CD8-positive, alpha-beta T cell (primary cell): ENCODE measurements at regions of chr20 and their contacts with region 1.

Region 1: DNA sequence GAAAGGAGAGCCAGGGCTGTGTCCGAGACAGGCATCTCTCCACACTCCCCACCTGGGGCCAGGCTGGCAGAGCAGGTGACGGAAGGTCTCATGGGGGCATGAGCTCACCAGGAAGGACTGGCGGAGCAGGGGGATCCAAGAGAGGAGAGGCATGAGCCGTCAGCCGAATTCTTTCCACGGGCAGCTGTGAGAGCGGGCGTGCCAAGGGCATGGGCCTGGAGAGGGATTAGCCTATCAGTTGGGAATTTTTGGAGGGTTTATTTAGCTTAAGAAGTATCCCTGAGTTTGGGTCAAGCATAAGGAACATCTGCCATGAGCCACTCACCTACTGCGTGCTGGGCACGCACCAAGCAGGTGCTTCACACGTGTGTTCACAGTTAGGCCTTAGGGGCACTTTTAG is 60.2 kb upstream of the ZNFX1 start:
- DNase-seq: no peak
- ATAC-seq: no peak
- H3K4me3 ChIP-seq: no peak overlapping the region
- H3K4me3 Mint-ChIP-seq: no peak overlapping the region
- H3K27ac ChIP-seq: no peak overlapping the region
- H3K27ac Mint-ChIP-seq: no peak overlapping the region
- H3K4me1 ChIP-seq: no peaks in the 10 kb centered on the region
- H3K4me1 Mint-ChIP-seq: no peaks in the 10 kb centered on the region
- H3K27me3 ChIP-seq: peaks cover 3% of the 10 kb centered on the region in 2 experiments
- H3K27me3 Mint-ChIP-seq: peaks cover 5% of the 10 kb centered on the region
- CTCF ChIP-seq: no peak

Region 2: DNA sequence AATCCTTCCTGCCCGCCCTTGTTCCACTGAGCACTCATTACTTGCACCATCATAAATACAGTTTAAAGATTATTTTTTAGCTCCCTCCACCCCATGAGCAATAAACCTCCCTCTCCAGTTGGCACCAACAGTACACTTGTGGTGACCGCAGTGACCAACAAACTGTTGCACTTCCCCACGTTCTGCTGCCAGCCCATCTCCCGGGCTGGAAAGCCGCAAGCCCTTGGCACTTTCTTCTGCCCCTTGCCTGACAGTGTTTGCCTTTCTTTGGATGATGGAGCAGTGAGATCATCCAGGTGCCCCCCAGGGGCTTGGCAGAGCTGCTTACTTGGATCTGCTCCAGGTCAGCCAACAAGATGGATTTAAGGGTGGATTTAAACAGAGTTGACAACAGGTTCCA is 122.9 kb after region 1 on chr20:
- CTCF ChIA-PET with region 1: no interaction called
- POLR2A ChIA-PET with region 1: no interaction called
- intact Hi-C with region 1: no loop called
- DNase-seq: no peak
- ATAC-seq: no peak
- H3K4me3 ChIP-seq: no peak overlapping the region
- H3K4me3 Mint-ChIP-seq: no peak overlapping the region
- H3K27ac ChIP-seq: no peak overlapping the region
- H3K27ac Mint-ChIP-seq: no peak overlapping the region
- H3K4me1 ChIP-seq: no peaks in the 10 kb centered on the region
- H3K4me1 Mint-ChIP-seq: no peaks in the 10 kb centered on the region
- H3K27me3 ChIP-seq: peaks cover 0 to 2% of the 10 kb centered on the region in 2 experiments
- H3K27me3 Mint-ChIP-seq: peaks cover 5% of the 10 kb centered on the region
- CTCF ChIP-seq: no peak

Region 3: GRCh38 chr20:49484180-49485140 is 146.4 kb after region 1 on chr20:
- CTCF ChIA-PET with region 1: interaction called, 6 read pairs
- POLR2A ChIA-PET with region 1: no interaction called
- intact Hi-C with region 1: loop called in 1 of 2 experiments (anchors 1 kb)
- DNase-seq: peak; percentile 3 to 66 (median 50)
- ATAC-seq: peak; percentile 69
- H3K4me3 ChIP-seq: peak overlapping the region; percentile 20 to 35
- H3K4me3 Mint-ChIP-seq: peak overlapping the region; percentile 82
- H3K27ac ChIP-seq: no peak overlapping the region
- H3K27ac Mint-ChIP-seq: no peak overlapping the region
- H3K4me1 ChIP-seq: peaks cover 11% of the 10 kb centered on the region
- H3K4me1 Mint-ChIP-seq: peaks cover 7% of the 10 kb centered on the region
- H3K27me3 ChIP-seq: peaks cover 9 to 20% of the 10 kb centered on the region in 2 experiments
- H3K27me3 Mint-ChIP-seq: peaks cover 70% of the 10 kb centered on the region
- CTCF ChIP-seq: peak; percentile 25

Region 4: DNA sequence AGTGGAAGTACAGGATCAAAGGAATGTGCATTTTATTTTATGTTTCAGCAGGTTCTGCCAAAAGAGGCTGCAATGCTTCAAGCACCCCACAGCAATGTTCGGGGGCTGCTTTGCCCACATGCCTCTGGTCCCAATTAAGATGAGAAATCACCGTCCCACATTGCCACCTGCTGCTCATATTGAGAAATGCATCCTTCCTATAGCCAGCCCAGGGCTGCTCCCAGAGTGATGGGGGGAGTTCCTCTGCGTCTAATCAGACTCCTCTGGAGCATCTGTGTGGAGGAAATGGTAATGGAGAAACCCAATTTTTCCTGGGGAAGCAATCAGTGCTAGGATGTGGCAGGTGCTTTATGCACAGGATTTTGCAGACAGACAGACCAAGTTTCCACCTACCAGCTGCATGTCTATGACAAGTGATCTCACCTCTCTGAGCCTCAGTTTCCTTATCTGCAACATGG is 196.2 kb after region 1 on chr20:
- CTCF ChIA-PET with region 1: interaction called, 6 read pairs
- POLR2A ChIA-PET with region 1: no interaction called
- intact Hi-C with region 1: loop called in 1 of 2 experiments (anchors 1 kb)
- DNase-seq: peak; percentile 36 to 73 (median 58)
- ATAC-seq: peak; percentile 80
- H3K4me3 ChIP-seq: no peak overlapping the region
- H3K4me3 Mint-ChIP-seq: no peak overlapping the region
- H3K27ac ChIP-seq: no peak overlapping the region
- H3K27ac Mint-ChIP-seq: no peak overlapping the region
- H3K4me1 ChIP-seq: no peaks in the 10 kb centered on the region
- H3K4me1 Mint-ChIP-seq: peaks cover 12% of the 10 kb centered on the region
- H3K27me3 ChIP-seq: peaks cover 0 to 2% of the 10 kb centered on the region in 2 experiments
- H3K27me3 Mint-ChIP-seq: peaks cover 14% of the 10 kb centered on the region
- CTCF ChIP-seq: peak; percentile 83

Region 5: DNA sequence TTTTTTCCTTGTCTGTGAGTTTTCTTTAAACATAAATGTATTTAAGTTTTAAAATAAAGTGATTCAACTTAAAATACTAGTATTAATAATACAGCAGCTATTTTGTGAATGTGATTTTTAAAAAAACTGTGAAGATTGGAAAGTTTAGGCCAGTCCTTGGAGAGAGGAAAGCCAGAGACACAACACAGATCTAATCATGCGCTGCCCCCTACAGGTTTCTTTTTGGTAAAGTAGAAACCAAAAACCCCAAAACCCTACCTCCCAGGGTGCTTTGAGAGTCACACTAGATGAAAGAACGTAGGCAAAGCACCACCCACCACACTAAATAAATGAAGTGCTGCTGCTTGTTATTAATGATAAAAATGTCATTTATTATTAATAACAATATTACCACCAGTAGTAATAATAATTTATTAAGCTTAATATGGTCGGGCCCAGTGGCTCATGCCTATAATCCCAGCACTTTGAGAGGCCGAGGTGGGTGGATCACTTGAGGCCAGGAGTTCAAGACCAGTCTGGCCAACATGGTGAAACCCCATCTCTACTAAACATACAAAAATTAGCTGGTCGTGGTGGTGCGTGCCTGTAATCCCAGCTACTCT is 508.2 kb after region 1 on chr20:
- CTCF ChIA-PET with region 1: interaction called, 5 read pairs
- POLR2A ChIA-PET with region 1: interaction called, 3 read pairs
- intact Hi-C with region 1: loop called in 1 of 2 experiments (anchors 10 kb)
- DNase-seq: peak in 7 of 9 experiments; percentile 33 to 76 (median 55)
- ATAC-seq: peak; percentile 73
- H3K4me3 ChIP-seq: no peak overlapping the region
- H3K4me3 Mint-ChIP-seq: no peak overlapping the region
- H3K27ac ChIP-seq: no peak overlapping the region
- H3K27ac Mint-ChIP-seq: no peak overlapping the region
- H3K4me1 ChIP-seq: no peaks in the 10 kb centered on the region
- H3K4me1 Mint-ChIP-seq: peaks cover 9% of the 10 kb centered on the region
- H3K27me3 ChIP-seq: no peaks in the 10 kb centered on the region
- H3K27me3 Mint-ChIP-seq: no peaks in the 10 kb centered on the region
- CTCF ChIP-seq: peak; percentile 81

Region 6: GRCh38 chr20:49928401-49929141 is 590.5 kb after region 1 on chr20:
- CTCF ChIA-PET with region 1: no interaction called
- POLR2A ChIA-PET with region 1: no interaction called
- intact Hi-C with region 1: loop called in 1 of 2 experiments (anchors 2 kb)
- DNase-seq: peak; percentile 57 to 88 (median 82)
- ATAC-seq: peak; percentile 99
- H3K4me3 ChIP-seq: no peak overlapping the region
- H3K4me3 Mint-ChIP-seq: peak overlapping the region; percentile 27
- H3K27ac ChIP-seq: no peak overlapping the region
- H3K27ac Mint-ChIP-seq: peak overlapping the region; percentile 46
- H3K4me1 ChIP-seq: peaks cover 6% of the 10 kb centered on the region
- H3K4me1 Mint-ChIP-seq: peaks cover 8% of the 10 kb centered on the region
- H3K27me3 ChIP-seq: no peaks in the 10 kb centered on the region
- H3K27me3 Mint-ChIP-seq: peaks cover 2% of the 10 kb centered on the region
- CTCF ChIP-seq: peak; percentile 95